ENCODE measurements at regions of chr4 and their contacts with region 1.

Region 1: DNA sequence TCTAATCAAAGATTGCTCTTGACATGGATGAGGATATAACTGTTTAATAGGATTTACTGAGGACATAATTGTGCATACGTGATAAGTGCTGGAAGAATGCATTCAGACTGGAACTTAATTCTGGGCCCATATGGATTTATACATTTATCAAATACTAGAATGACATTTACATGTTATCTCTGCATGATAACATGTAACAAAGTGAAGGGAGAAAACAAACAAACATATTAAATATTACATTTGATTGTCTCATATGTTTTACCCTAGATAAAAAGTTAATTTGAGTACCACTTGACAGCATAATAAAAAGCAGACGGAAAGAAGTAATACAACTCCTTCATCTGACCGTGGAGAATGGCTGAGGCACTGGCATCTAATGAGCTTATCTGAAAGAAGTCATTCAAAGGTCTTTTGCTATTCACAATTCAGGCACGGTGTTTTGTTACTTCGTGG is 297.8 kb downstream of the PPP3CA start:
- DNase-seq: no peak
- ATAC-seq: no peak
- H3K4me3 ChIP-seq: no peak overlapping the region
- H3K4me3 Mint-ChIP-seq: no peak overlapping the region
- H3K27ac ChIP-seq: no peak overlapping the region
- H3K27ac Mint-ChIP-seq: no peak overlapping the region
- H3K4me1 ChIP-seq: no peaks in the 10 kb centered on the region
- H3K4me1 Mint-ChIP-seq: peaks cover 19 to 20% of the 10 kb centered on the region in 2 donors
- H3K27me3 ChIP-seq: no peaks in the 10 kb centered on the region
- H3K27me3 Mint-ChIP-seq: no peaks in the 10 kb centered on the region
- CTCF ChIP-seq: no peak

Region 2: GRCh38 chr4:101014417-101014816 is 35.2 kb before region 1 on chr4:
- intact Hi-C with region 1: loop called (anchors 5 kb)
- DNase-seq: no peak
- ATAC-seq: no peak
- H3K4me3 ChIP-seq: no peak overlapping the region
- H3K4me3 Mint-ChIP-seq: no peak overlapping the region
- H3K27ac ChIP-seq: no peak overlapping the region
- H3K27ac Mint-ChIP-seq: peak overlapping the region in 1 of 2 donors; percentile 33
- H3K4me1 ChIP-seq: peaks cover 21% of the 10 kb centered on the region
- H3K4me1 Mint-ChIP-seq: peaks cover 36 to 47% of the 10 kb centered on the region in 2 donors
- H3K27me3 ChIP-seq: no peaks in the 10 kb centered on the region
- H3K27me3 Mint-ChIP-seq: no peaks in the 10 kb centered on the region
- CTCF ChIP-seq: no peak